Naive thymus-derived CD4-positive, alpha-beta T cell (primary cell): ENCODE measurements at regions of chr2 and their contacts with region 1.

Region 1: GRCh38 chr2:69914170-69914960 is 544 bp upstream of the MXD1 start:
- DNase-seq: peak in 7 of 9 donors; percentile 97 to 100 (median 100)
- ATAC-seq: peak; percentile 94
- H3K4me3 ChIP-seq: peak overlapping the region; percentile 98
- H3K4me3 Mint-ChIP-seq: peak overlapping the region; percentile 70 to 92 (median 82)
- H3K27ac ChIP-seq: peak overlapping the region; percentile 91
- H3K27ac Mint-ChIP-seq: peak overlapping the region; percentile 60 to 96 (median 89)
- H3K4me1 ChIP-seq: peaks cover 4 to 8% of the 10 kb centered on the region in 2 donors
- H3K4me1 Mint-ChIP-seq: peaks cover 8 to 39% (median 34%) of the 10 kb centered on the region in 7 donors
- H3K27me3 ChIP-seq: no peaks in the 10 kb centered on the region
- H3K27me3 Mint-ChIP-seq: no peaks in the 10 kb centered on the region

Region 2: GRCh38 chr2:69829256-69830046 is 84.9 kb before region 1 on chr2 and contains the start of gene GMCL1:
- CTCF ChIA-PET with region 1: no interaction called
- POLR2A ChIA-PET with region 1: no interaction called
- intact Hi-C with region 1: loop called in 1 of 2 experiments (anchors 1 kb)
- DNase-seq: peak; percentile 98 to 100 (median 99)
- ATAC-seq: peak; percentile 97
- H3K4me3 ChIP-seq: peak within 1 kb of the TSS; percentile 81
- H3K4me3 Mint-ChIP-seq: peak within 1 kb of the TSS; percentile 83 to 97 (median 94)
- H3K27ac ChIP-seq: peak within 1 kb of the TSS; percentile 88
- H3K27ac Mint-ChIP-seq: peak within 1 kb of the TSS; percentile 89 to 97 (median 95)
- H3K4me1 ChIP-seq: peaks cover 10 to 17% of the 10 kb centered on the region in 2 donors
- H3K4me1 Mint-ChIP-seq: peaks cover 31 to 61% (median 54%) of the 10 kb centered on the region in 7 donors
- H3K27me3 ChIP-seq: no peaks in the 10 kb centered on the region
- H3K27me3 Mint-ChIP-seq: no peaks in the 10 kb centered on the region
- total RNA-seq, gene GMCL1: 24.9 to 30.5 (median 27.3) TPM

Region 3: DNA sequence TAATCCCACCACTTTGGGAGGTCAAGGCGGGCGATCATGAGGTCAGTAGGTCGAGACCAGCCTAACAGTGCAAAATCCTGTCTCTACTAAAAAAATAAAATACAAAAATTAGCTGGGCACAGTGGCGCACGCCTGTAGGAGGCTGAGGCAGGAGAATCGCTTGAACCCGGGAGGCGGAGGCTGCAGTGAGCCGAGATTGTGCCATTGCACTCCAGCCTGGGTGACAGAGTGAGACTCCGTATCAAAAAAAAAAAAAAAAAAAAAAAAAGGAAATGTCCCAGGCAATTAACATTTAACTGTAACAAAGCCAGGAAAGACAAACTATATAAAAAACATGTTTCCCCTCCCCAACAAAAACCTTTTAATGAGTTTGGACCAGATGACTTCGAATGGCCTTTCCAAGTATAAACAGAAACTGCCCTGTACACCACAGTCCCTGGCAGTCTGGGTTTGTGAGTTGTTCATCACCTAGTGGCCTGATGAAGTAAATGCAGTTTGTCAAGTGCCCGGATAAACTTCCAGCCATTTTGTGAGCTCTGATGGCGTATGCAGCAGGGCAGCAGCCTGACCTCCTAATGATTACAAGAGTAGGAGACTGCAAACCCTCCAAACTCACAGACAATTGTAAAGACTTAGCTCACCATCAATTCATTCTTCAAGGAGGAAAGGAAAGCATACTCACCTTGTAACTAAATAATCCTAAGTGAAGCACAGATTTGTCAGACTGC is 156.3 kb after region 1 on chr2:
- CTCF ChIA-PET with region 1: interaction called, 29 read pairs
- POLR2A ChIA-PET with region 1: interaction called, 34 read pairs
- intact Hi-C with region 1: loop called (anchors 1 kb)
- DNase-seq: peak in 8 of 9 donors; percentile 49 to 80 (median 70)
- ATAC-seq: peak; percentile 85
- H3K4me3 ChIP-seq: peak overlapping the region; percentile 48
- H3K4me3 Mint-ChIP-seq: peak overlapping the region; percentile 56 to 91 (median 80)
- H3K27ac ChIP-seq: peak overlapping the region; percentile 71
- H3K27ac Mint-ChIP-seq: peak overlapping the region; percentile 89 to 99 (median 95)
- H3K4me1 ChIP-seq: peaks cover 35 to 36% of the 10 kb centered on the region in 2 donors
- H3K4me1 Mint-ChIP-seq: peaks cover 19 to 72% (median 63%) of the 10 kb centered on the region in 7 donors
- H3K27me3 ChIP-seq: no peaks in the 10 kb centered on the region
- H3K27me3 Mint-ChIP-seq: no peaks in the 10 kb centered on the region

Region 4: GRCh38 chr2:70124983-70125480 is 210.7 kb after region 1 on chr2:
- CTCF ChIA-PET with region 1: interaction called, 5 read pairs
- POLR2A ChIA-PET with region 1: interaction called, 33 read pairs
- intact Hi-C with region 1: loop called in 1 of 2 experiments (anchors 1 kb)
- DNase-seq: peak in 6 of 9 donors; percentile 59 to 74 (median 70)
- ATAC-seq: peak; percentile 74
- H3K4me3 ChIP-seq: peak overlapping the region; percentile 92
- H3K4me3 Mint-ChIP-seq: peak overlapping the region; percentile 84 to 99 (median 96)
- H3K27ac ChIP-seq: peak overlapping the region; percentile 97
- H3K27ac Mint-ChIP-seq: peak overlapping the region; percentile 96 to 100 (median 99)
- H3K4me1 ChIP-seq: peaks cover 52 to 54% of the 10 kb centered on the region in 2 donors
- H3K4me1 Mint-ChIP-seq: peaks cover 46 to 82% (median 70%) of the 10 kb centered on the region in 7 donors
- H3K27me3 ChIP-seq: no peaks in the 10 kb centered on the region
- H3K27me3 Mint-ChIP-seq: no peaks in the 10 kb centered on the region

Region 5: DNA sequence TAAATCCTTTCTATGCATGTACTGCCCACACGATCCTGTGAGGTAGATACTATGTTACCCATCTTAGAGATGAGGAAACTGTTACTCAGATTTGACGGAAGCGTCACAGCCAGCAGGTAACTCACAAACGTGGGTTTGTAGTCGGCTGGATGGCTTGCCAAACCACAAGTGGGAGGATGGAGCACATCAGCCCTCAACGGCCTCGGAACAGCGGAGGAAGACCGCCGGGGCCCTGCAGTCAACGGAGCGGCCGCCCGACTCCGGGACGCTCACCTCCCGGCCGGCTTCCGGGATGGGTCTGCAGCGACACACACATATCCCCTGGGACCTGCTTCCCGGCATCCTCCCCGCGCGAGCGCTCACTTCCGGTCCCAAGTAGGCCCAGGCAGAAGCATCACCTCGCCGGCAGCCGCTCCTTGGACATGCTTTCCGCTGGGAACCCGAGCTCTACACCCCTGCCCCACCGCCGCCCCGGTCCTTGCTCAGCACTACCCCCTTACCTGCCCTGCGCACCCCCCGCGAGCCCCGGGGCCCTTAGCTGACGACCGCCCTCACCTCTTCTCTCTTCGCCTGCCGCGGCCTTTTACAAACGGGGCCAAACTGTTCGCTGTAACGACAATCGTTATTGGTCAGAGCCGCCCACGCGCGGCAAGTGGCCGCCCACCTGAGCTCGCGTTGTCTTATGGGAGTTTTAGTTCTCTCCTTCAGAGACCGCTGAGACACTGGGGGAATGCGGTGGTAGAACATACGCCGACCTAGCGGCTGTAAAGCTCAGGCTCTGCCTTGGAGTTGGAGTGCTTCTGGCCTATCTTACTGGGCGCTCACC is 276.3 kb after region 1 on chr2 and contains the start of gene C2orf42:
- CTCF ChIA-PET with region 1: interaction called, 6 read pairs
- POLR2A ChIA-PET with region 1: interaction called, 47 read pairs
- intact Hi-C with region 1: loop called (anchors 1 kb)
- DNase-seq: peak; percentile 87 to 97 (median 96)
- ATAC-seq: peak; percentile 94
- H3K4me3 ChIP-seq: peak within 1 kb of the TSS; percentile 72
- H3K4me3 Mint-ChIP-seq: peak within 1 kb of the TSS; percentile 86 to 97 (median 93)
- H3K27ac ChIP-seq: peak within 1 kb of the TSS; percentile 93
- H3K27ac Mint-ChIP-seq: peak within 1 kb of the TSS; percentile 94 to 100 (median 99)
- H3K4me1 ChIP-seq: peaks cover 0 to 8% of the 10 kb centered on the region in 2 donors
- H3K4me1 Mint-ChIP-seq: peaks cover 7 to 24% (median 21%) of the 10 kb centered on the region in 7 donors
- H3K27me3 ChIP-seq: no peaks in the 10 kb centered on the region
- H3K27me3 Mint-ChIP-seq: peaks cover 0 to 2% (median 0%) of the 10 kb centered on the region in 5 donors
- total RNA-seq, gene C2orf42: 20.6 to 45.9 (median 30.3) TPM

Region 6: DNA sequence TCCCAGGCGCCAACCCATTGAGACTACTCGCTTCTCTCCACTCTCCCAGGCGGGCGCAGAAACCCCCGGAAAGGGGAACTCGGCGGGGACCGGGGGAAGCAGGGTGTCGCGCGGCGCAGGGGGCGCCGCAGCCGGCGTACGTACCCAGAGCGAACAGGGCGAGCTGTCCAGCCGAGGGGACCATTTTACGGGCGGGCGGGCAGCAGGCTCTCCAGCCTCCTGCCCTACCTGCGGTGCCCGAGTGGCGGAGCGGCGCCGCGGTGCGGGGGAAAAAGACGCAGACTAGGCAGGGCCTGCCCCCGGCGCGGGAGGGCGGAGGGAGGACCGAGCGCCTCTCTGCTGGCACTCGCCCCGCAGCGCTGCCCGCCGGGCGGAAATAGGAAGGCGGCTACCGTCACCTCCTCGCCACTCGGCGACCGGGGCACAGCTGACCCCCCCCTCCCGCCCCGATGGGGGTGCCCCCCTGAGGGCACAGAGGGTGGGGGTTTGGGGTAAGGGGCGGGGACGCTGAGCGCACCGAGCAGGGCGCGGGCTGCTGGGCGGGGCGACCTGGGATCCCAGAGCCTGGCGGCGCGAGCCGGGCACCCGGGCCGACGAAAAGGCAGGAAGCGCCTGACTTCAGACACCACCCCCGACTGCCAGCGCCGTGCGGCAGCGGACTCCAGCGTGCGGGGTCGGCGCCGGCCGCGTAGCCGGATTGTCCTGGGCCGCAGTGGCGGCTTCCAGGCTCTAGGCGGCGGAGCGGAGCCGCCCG is 639.4 kb after region 1 on chr2 and contains the start of gene TGFA:
- CTCF ChIA-PET with region 1: no interaction called
- POLR2A ChIA-PET with region 1: no interaction called
- intact Hi-C with region 1: loop called in 1 of 2 experiments (anchors 10 kb)
- DNase-seq: peak; percentile 51 to 69 (median 68)
- ATAC-seq: peak; percentile 85
- H3K4me3 ChIP-seq: peak within 1 kb of the TSS; percentile 65
- H3K4me3 Mint-ChIP-seq: peak within 1 kb of the TSS; percentile 79 to 96 (median 90)
- H3K27ac ChIP-seq: peak within 1 kb of the TSS; percentile 60
- H3K27ac Mint-ChIP-seq: peak within 1 kb of the TSS; percentile 46 to 89 (median 79)
- H3K4me1 ChIP-seq: peaks cover 14 to 21% of the 10 kb centered on the region in 2 donors
- H3K4me1 Mint-ChIP-seq: peaks cover 15 to 37% (median 32%) of the 10 kb centered on the region in 7 donors
- H3K27me3 ChIP-seq: no peaks in the 10 kb centered on the region
- H3K27me3 Mint-ChIP-seq: peaks cover 0 to 77% (median 4%) of the 10 kb centered on the region in 5 donors
- total RNA-seq, gene TGFA: 0.98 to 3.2 (median 2.3) TPM in 4 of 5 experiments, not detected in the other

Region 7: GRCh38 chr2:70627211-70627902 is 713.0 kb after region 1 on chr2:
- CTCF ChIA-PET with region 1: no interaction called
- POLR2A ChIA-PET with region 1: no interaction called
- intact Hi-C with region 1: no loop called
- DNase-seq: no peak
- ATAC-seq: no peak
- H3K4me3 ChIP-seq: no peak overlapping the region
- H3K4me3 Mint-ChIP-seq: no peak overlapping the region
- H3K27ac ChIP-seq: no peak overlapping the region
- H3K27ac Mint-ChIP-seq: no peak overlapping the region
- H3K4me1 ChIP-seq: no peaks in the 10 kb centered on the region
- H3K4me1 Mint-ChIP-seq: peaks cover 0 to 2% (median 0%) of the 10 kb centered on the region in 7 donors
- H3K27me3 ChIP-seq: no peaks in the 10 kb centered on the region
- H3K27me3 Mint-ChIP-seq: peaks cover 0 to 31% (median 0%) of the 10 kb centered on the region in 5 donors